Calu3 (cell line): ENCODE measurements at regions of chr14 and their contacts with region 1.

Region 1: GRCh38 chr14:34331728-34332623 is 130.1 kb downstream of the SPTSSA start:
- DNase-seq: peak; percentile 84
- H3K4me3 Mint-ChIP-seq: no peak overlapping the region
- H3K27ac Mint-ChIP-seq: peak overlapping the region; percentile 72
- H3K4me1 Mint-ChIP-seq: peaks cover 16% of the 10 kb centered on the region
- H3K27me3 Mint-ChIP-seq: no peaks in the 10 kb centered on the region
- CTCF ChIP-seq: peak; percentile 65

Region 2: GRCh38 chr14:33589326-33589725 is 742.6 kb before region 1 on chr14:
- CTCF ChIA-PET with region 1: no interaction called
- intact Hi-C with region 1: no loop called
- DNase-seq: no peak
- H3K4me3 Mint-ChIP-seq: no peak overlapping the region
- H3K27ac Mint-ChIP-seq: no peak overlapping the region
- H3K4me1 Mint-ChIP-seq: no peaks in the 10 kb centered on the region
- H3K27me3 Mint-ChIP-seq: peaks cover 24% of the 10 kb centered on the region
- CTCF ChIP-seq: no peak

Region 3: DNA sequence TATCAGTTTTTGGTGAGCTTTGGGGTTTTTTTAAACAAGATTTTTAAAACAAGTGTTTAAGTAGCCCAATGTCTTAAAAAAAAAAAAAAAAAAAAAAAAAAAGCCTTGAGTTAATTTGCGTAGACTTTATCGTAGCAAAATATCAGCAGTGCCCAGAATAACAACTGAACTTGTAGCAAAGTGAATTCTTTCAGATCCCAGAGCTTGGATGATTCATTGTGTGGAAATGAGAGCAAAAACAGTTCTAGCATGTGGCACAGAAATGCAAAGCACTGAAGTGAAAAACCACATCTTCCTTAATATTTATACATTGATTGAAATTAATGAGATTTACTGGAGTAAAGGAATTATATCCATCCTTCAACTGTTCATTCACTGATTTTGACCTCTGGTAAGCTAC is 639.2 kb before region 1 on chr14:
- CTCF ChIA-PET with region 1: no interaction called
- intact Hi-C with region 1: no loop called
- DNase-seq: no peak
- H3K4me3 Mint-ChIP-seq: no peak overlapping the region
- H3K27ac Mint-ChIP-seq: no peak overlapping the region
- H3K4me1 Mint-ChIP-seq: no peaks in the 10 kb centered on the region
- H3K27me3 Mint-ChIP-seq: peaks cover 28% of the 10 kb centered on the region
- CTCF ChIP-seq: no peak

Region 4: GRCh38 chr14:34374980-34375740 is 43.2 kb after region 1 on chr14:
- CTCF ChIA-PET with region 1: interaction called, 7 read pairs
- intact Hi-C with region 1: loop called (anchors 2 kb)
- DNase-seq: peak; percentile 61
- H3K4me3 Mint-ChIP-seq: peak overlapping the region; percentile 21
- H3K27ac Mint-ChIP-seq: no peak overlapping the region
- H3K4me1 Mint-ChIP-seq: peaks cover 24% of the 10 kb centered on the region
- H3K27me3 Mint-ChIP-seq: no peaks in the 10 kb centered on the region
- CTCF ChIP-seq: no peak

Region 5: GRCh38 chr14:34461334-34462131 is 129.6 kb after region 1 on chr14:
- CTCF ChIA-PET with region 1: interaction called, 5 read pairs
- intact Hi-C with region 1: loop called (anchors 2 kb)
- DNase-seq: peak; percentile 51
- H3K4me3 Mint-ChIP-seq: peak overlapping the region; percentile 82
- H3K27ac Mint-ChIP-seq: peak overlapping the region; percentile 78
- H3K4me1 Mint-ChIP-seq: no peaks in the 10 kb centered on the region
- H3K27me3 Mint-ChIP-seq: no peaks in the 10 kb centered on the region
- CTCF ChIP-seq: no peak